ENCODE measurements at regions of chr3 and their contacts with region 1.

Region 1: GRCh38 chr3:100993309-100993708 is at the start of gene ABI3BP:
- DNase-seq: peak; percentile 89
- ATAC-seq: peak; percentile 99
- H3K4me3 ChIP-seq: peak within 1 kb of the TSS; percentile 55
- H3K27ac ChIP-seq: peak within 1 kb of the TSS; percentile 10; the same call in 1 of the 2 replicates
- H3K4me1 ChIP-seq: peaks cover 2% of the 10 kb centered on the region; the same call in 1 of the 2 replicates
- H3K27me3 ChIP-seq: peaks cover 2% of the 10 kb centered on the region
- CTCF ChIP-seq: no peak
- POLR2A ChIP-seq: no peak
- RAD21 ChIP-seq: no peak; the same call in 1 of the 2 replicates
- total RNA-seq, gene ABI3BP: 3.0 and 4.2 TPM in 2 replicates

Region 2: GRCh38 chr3:100899440-100900091 is 93.7 kb before region 1 on chr3:
- CTCF ChIA-PET with region 1: no interaction called
- POLR2A ChIA-PET with region 1: no interaction called
- dilution Hi-C with region 1: no loop called
- in situ Hi-C with region 1: no loop called
- intact Hi-C with region 1: loop called (anchors 5 kb)
- DNase-seq: no peak
- ATAC-seq: no peak
- H3K4me3 ChIP-seq: no peak overlapping the region
- H3K27ac ChIP-seq: no peak overlapping the region
- H3K4me1 ChIP-seq: no peaks in the 10 kb centered on the region
- H3K27me3 ChIP-seq: no peaks in the 10 kb centered on the region
- CTCF ChIP-seq: no peak
- POLR2A ChIP-seq: no peak
- RAD21 ChIP-seq: no peak

Region 3: GRCh38 chr3:101010296-101010695 is 17.0 kb after region 1 on chr3:
- CTCF ChIA-PET with region 1: no interaction called
- POLR2A ChIA-PET with region 1: no interaction called
- dilution Hi-C with region 1: no loop called
- in situ Hi-C with region 1: no loop called
- intact Hi-C with region 1: no loop called
- DNase-seq: peak; percentile 60
- ATAC-seq: no peak; the same call in 1 of the 2 replicates
- H3K4me3 ChIP-seq: no peak overlapping the region
- H3K27ac ChIP-seq: no peak overlapping the region
- H3K4me1 ChIP-seq: no peaks in the 10 kb centered on the region
- H3K27me3 ChIP-seq: no peaks in the 10 kb centered on the region
- CTCF ChIP-seq: no peak
- POLR2A ChIP-seq: no peak
- RAD21 ChIP-seq: no peak

Region 4: DNA sequence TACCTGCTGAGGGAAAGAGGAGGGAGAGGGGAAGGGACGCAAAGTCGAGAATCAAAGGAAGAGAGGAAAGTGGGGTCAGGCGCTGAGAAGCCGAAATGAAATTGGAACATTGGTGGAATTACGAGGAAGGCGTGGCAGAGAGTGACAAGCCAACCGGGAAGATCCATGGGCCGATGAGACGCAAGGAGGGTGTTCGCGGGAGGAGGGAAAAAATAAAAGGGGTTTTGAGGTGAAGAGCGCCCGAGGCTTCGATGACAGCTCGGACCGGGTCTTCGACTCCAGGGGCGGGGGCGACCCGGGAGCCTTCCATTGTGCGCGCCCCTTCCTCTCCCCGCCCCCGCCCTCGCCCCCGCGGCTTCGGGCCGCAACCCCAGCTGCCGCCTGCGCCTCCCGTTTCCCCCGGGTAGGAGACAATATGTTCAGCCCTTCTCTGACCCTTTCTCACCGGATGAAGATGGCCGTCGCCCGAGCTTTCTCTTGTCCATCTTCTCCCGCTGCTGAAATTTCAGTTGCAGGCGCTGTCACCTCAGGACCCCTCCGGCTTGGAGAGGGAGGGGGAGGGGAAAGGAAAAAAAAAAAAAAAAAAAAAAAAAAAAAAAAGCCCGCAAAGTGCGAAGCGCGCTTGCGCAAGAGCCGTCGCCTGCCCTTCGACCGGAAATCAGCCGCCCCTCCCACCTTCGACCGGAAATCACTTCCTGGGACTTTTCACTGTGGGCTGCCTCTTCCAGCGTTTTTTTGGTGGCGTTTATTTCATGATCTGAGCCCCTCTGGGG is 519.5 kb after region 1 on chr3 and contains the start of gene SENP7:
- CTCF ChIA-PET with region 1: no interaction called
- POLR2A ChIA-PET with region 1: interaction called, 29 read pairs
- dilution Hi-C with region 1: no loop called
- in situ Hi-C with region 1: no loop called
- intact Hi-C with region 1: no loop called
- DNase-seq: peak; percentile 75
- ATAC-seq: peak; percentile 86
- H3K4me3 ChIP-seq: peak within 1 kb of the TSS; percentile 80
- H3K27ac ChIP-seq: peak within 1 kb of the TSS; percentile 98
- H3K4me1 ChIP-seq: 0 out of 2 replicates have a peak, but pooled peaks cover 2% of the 10 kb centered on the region
- H3K27me3 ChIP-seq: no peaks in the 10 kb centered on the region
- CTCF ChIP-seq: no peak
- POLR2A ChIP-seq: no peak
- RAD21 ChIP-seq: no peak
- total RNA-seq, gene SENP7: 8.4 and 14.7 TPM in 2 replicates